ENCODE measurements at regions of chr16 and their contacts with region 1.

Region 1: GRCh38 chr16:87853411-87854052 is 15.8 kb downstream of the SLC7A5 start:
- DNase-seq: peak; percentile 97
- ATAC-seq: peak; percentile 80
- H3K4me3 Mint-ChIP-seq: peak overlapping the region; percentile 68
- H3K27ac Mint-ChIP-seq: peak overlapping the region; percentile 93
- H3K4me1 Mint-ChIP-seq: peaks cover 62% of the 10 kb centered on the region
- H3K27me3 Mint-ChIP-seq: no peaks in the 10 kb centered on the region
- CTCF ChIP-seq: no peak

Region 2: GRCh38 chr16:87492721-87493607 is 360.6 kb before region 1 on chr16 and contains the start of gene ZCCHC14:
- CTCF ChIA-PET with region 1: no interaction called
- POLR2A ChIA-PET with region 1: no interaction called
- intact Hi-C with region 1: loop called (anchors 10 kb)
- DNase-seq: peak; percentile 99
- ATAC-seq: peak; percentile 93
- H3K4me3 Mint-ChIP-seq: peak within 1 kb of the TSS; percentile 81
- H3K27ac Mint-ChIP-seq: peak within 1 kb of the TSS; percentile 82
- H3K4me1 Mint-ChIP-seq: peaks cover 47% of the 10 kb centered on the region
- H3K27me3 Mint-ChIP-seq: peaks cover 7% of the 10 kb centered on the region
- CTCF ChIP-seq: no peak
- total RNA-seq, gene ZCCHC14: 4.6 to 5.9 TPM

Region 3: DNA sequence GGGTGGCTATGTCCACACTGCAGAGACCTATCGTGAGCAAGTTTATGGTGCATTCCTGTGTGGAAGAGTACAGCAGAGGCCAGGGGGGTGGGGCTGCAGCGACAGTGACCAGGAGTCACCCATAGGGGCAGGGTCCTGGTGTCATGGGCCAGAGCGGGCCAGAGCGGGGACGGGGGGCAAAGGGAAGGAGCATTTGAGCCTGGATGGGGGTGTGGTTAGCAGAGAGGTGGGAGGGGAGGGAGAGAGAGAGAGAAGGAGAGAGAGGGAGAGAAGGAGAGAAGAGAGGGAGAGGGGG is 233.4 kb before region 1 on chr16:
- CTCF ChIA-PET with region 1: no interaction called
- POLR2A ChIA-PET with region 1: no interaction called
- intact Hi-C with region 1: no loop called
- DNase-seq: no peak
- ATAC-seq: no peak
- H3K4me3 Mint-ChIP-seq: no peak overlapping the region
- H3K27ac Mint-ChIP-seq: no peak overlapping the region
- H3K4me1 Mint-ChIP-seq: no peaks in the 10 kb centered on the region
- H3K27me3 Mint-ChIP-seq: peaks cover 4% of the 10 kb centered on the region
- CTCF ChIP-seq: no peak

Region 4: GRCh38 chr16:87806603-87807546 is 46.7 kb before region 1 on chr16:
- CTCF ChIA-PET with region 1: interaction called, 16 read pairs
- POLR2A ChIA-PET with region 1: interaction called, 7 read pairs
- intact Hi-C with region 1: no loop called
- DNase-seq: peak; percentile 81
- ATAC-seq: peak; percentile 81
- H3K4me3 Mint-ChIP-seq: peak overlapping the region; percentile 87
- H3K27ac Mint-ChIP-seq: peak overlapping the region; percentile 95
- H3K4me1 Mint-ChIP-seq: peaks cover 32% of the 10 kb centered on the region
- H3K27me3 Mint-ChIP-seq: no peaks in the 10 kb centered on the region
- CTCF ChIP-seq: no peak

Region 5: GRCh38 chr16:87834623-87835407 is 18.7 kb before region 1 on chr16:
- CTCF ChIA-PET with region 1: interaction called, 11 read pairs
- POLR2A ChIA-PET with region 1: interaction called, 12 read pairs
- intact Hi-C with region 1: no loop called
- DNase-seq: no peak
- ATAC-seq: no peak
- H3K4me3 Mint-ChIP-seq: no peak overlapping the region
- H3K27ac Mint-ChIP-seq: no peak overlapping the region
- H3K4me1 Mint-ChIP-seq: no peaks in the 10 kb centered on the region
- H3K27me3 Mint-ChIP-seq: no peaks in the 10 kb centered on the region
- CTCF ChIP-seq: no peak

Region 6: GRCh38 chr16:87877938-87878507 is 24.5 kb after region 1 on chr16:
- CTCF ChIA-PET with region 1: interaction called, 178 read pairs
- POLR2A ChIA-PET with region 1: interaction called, 10 read pairs
- intact Hi-C with region 1: no loop called
- DNase-seq: peak; percentile 71
- ATAC-seq: peak; percentile 17
- H3K4me3 Mint-ChIP-seq: no peak overlapping the region
- H3K27ac Mint-ChIP-seq: no peak overlapping the region
- H3K4me1 Mint-ChIP-seq: peaks cover 50% of the 10 kb centered on the region
- H3K27me3 Mint-ChIP-seq: peaks cover 4% of the 10 kb centered on the region
- CTCF ChIP-seq: peak; percentile 55

Region 7: DNA sequence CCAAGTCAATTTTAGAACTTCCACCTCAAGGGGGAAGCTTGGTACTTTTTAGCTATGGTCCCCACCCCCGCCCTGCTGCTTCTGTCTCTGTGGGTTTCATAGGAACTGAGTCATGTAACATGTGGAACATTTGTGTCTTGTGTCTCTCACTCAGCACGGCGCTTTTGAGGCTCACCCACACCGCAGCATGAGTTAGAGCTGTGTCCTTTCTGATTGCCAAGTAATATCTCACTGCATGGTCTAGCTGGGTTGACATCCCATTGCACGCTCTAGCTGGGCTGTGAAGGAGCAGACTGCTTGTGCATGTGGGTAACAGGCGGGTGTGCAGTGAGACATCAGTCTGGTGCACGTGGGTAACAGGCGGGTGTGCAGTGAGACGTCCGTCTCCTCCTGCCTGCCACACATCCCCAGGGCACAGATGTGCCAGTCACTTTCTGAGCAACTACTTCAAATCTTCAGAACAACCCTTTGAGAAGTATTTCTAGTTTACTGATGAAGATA is 42.2 kb after region 1 on chr16:
- CTCF ChIA-PET with region 1: interaction called, 11 read pairs
- POLR2A ChIA-PET with region 1: interaction called, 3 read pairs
- intact Hi-C with region 1: no loop called
- DNase-seq: peak; percentile 98
- ATAC-seq: peak; percentile 87
- H3K4me3 Mint-ChIP-seq: peak overlapping the region; percentile 37
- H3K27ac Mint-ChIP-seq: peak overlapping the region; percentile 97
- H3K4me1 Mint-ChIP-seq: peaks cover 47% of the 10 kb centered on the region
- H3K27me3 Mint-ChIP-seq: no peaks in the 10 kb centered on the region
- CTCF ChIP-seq: no peak

Measured in activated CD8-positive, alpha-beta T cell treated with anti-CD3 and anti-CD28 coated beads for 36 hours (primary cell).